Vagina (tissue), 2 donors: ENCODE measurements at regions of chr13 and their contacts with region 1.

Region 1: DNA sequence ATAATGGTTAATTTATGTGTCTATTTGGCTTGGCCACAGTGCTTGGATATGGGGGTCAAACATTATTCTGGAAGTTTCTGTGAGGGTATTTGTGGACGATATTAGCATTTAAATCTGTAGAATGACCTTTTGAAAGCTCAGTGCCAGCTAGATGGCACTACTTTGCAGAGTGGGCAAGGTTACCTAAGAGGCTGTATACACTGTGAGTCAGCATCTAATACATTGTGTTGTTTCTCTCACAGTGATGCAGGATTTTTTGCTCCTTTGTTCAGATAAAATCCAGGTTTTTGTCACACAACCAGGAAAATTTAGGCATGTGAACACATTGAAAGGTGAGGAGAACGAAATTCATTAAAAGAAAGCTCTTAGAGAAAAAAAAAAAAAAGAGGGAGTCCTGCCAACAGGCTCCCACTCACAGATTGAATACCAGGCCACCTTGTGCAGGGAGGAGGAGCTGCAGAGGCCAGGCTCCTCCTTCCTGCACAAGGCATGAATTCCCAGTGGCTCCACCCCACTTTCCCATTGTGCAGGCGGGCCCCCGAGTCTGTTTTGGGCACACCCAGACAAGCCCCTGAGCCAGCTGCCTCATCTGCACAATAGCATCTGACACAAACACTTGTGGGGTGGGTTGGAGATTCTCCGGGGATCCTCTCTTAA is 551.0 kb upstream of the ATXN8OS start:
- DNase-seq: no peak
- H3K4me3 ChIP-seq: no peak overlapping the region
- H3K27ac ChIP-seq: no peak overlapping the region
- H3K4me1 ChIP-seq: no peaks in the 10 kb centered on the region
- H3K27me3 ChIP-seq: no peaks in the 10 kb centered on the region
- CTCF ChIP-seq: no peak
- POLR2A ChIP-seq: no peak

Region 2: DNA sequence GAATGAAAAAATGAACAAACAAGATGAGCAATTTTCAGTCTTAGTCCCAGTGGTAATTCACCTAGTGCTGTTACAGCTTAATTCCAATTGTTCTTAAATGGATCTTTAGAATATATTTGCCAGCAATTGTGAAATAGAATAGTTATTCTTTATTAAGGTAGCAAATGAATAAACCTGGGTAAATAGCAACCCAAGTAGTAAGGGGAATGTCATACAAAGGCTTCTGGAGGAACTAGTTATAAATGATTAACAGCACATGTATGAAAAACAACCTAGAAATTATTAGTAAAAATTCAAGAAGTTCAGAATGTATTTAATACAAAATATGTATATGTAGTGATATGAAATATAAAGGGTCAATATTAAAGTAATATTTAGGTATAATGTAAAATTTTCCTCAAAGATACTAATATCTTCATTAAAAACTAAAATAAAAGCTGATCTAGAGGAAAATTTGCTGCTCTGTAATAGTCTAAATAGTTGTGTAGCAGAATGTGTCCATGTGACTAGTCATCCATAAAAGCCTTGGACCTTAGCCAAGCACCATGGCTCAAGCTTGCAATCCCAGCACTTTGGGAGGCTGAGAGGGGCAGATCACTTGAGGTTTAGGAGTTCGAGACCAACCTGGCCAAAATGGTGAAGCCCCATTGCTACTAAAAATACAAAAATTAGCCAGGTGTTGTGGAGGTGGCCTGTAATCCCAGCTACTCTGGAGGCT is 15.1 kb after region 1 on chr13:
- intact Hi-C with region 1: loop called (anchors 2 kb)
- DNase-seq: no peak
- H3K4me3 ChIP-seq: no peak overlapping the region
- H3K27ac ChIP-seq: no peak overlapping the region
- H3K4me1 ChIP-seq: no peaks in the 10 kb centered on the region
- H3K27me3 ChIP-seq: no peaks in the 10 kb centered on the region
- CTCF ChIP-seq: no peak
- POLR2A ChIP-seq: no peak